Activated CD4-positive, alpha-beta T cell treated with anti-CD3 and anti-CD28 coated beads, Interleukin-2, amount 10 ng/mL, durations not matched to agents 24 days and 14 days (primary cell): ENCODE measurements at regions of chr2 and their contacts with region 1.

Region 1: GRCh38 chr2:98664327-98664726 is 55.9 kb downstream of the UNC50 start:
- DNase-seq: peak; percentile 88
- H3K4me3 Mint-ChIP-seq: peak overlapping the region; percentile 39
- H3K27ac Mint-ChIP-seq: peak overlapping the region; percentile 100
- H3K4me1 Mint-ChIP-seq: peaks cover 59% of the 10 kb centered on the region
- H3K27me3 Mint-ChIP-seq: no peaks in the 10 kb centered on the region

Region 2: GRCh38 chr2:98692090-98693054 is 28.0 kb after region 1 on chr2:
- intact Hi-C with region 1: loop called (anchors 2 kb)
- DNase-seq: no peak
- H3K4me3 Mint-ChIP-seq: peak overlapping the region; percentile 53
- H3K27ac Mint-ChIP-seq: peak overlapping the region; percentile 83
- H3K4me1 Mint-ChIP-seq: peaks cover 59% of the 10 kb centered on the region
- H3K27me3 Mint-ChIP-seq: no peaks in the 10 kb centered on the region

Region 3: GRCh38 chr2:99154643-99155536 is 490.6 kb after region 1 on chr2 and contains the starts of genes LIPT1 and TSGA10:
- intact Hi-C with region 1: loop called (anchors 10 kb)
- DNase-seq: peak; percentile 98
- H3K4me3 Mint-ChIP-seq: no peak within 1 kb of the TSS
- H3K27ac Mint-ChIP-seq: peak within 1 kb of the TSS; percentile 83
- H3K4me1 Mint-ChIP-seq: peaks cover 35% of the 10 kb centered on the region
- H3K27me3 Mint-ChIP-seq: no peaks in the 10 kb centered on the region
- total RNA-seq, gene LIPT1: 3.3 and 3.9 TPM in 2 replicates
- total RNA-seq, gene TSGA10: 3.2 and 3.7 TPM in 2 replicates